WTC11 (cell line): ENCODE measurements at regions of chr7 and their contacts with region 1.

Region 1: DNA sequence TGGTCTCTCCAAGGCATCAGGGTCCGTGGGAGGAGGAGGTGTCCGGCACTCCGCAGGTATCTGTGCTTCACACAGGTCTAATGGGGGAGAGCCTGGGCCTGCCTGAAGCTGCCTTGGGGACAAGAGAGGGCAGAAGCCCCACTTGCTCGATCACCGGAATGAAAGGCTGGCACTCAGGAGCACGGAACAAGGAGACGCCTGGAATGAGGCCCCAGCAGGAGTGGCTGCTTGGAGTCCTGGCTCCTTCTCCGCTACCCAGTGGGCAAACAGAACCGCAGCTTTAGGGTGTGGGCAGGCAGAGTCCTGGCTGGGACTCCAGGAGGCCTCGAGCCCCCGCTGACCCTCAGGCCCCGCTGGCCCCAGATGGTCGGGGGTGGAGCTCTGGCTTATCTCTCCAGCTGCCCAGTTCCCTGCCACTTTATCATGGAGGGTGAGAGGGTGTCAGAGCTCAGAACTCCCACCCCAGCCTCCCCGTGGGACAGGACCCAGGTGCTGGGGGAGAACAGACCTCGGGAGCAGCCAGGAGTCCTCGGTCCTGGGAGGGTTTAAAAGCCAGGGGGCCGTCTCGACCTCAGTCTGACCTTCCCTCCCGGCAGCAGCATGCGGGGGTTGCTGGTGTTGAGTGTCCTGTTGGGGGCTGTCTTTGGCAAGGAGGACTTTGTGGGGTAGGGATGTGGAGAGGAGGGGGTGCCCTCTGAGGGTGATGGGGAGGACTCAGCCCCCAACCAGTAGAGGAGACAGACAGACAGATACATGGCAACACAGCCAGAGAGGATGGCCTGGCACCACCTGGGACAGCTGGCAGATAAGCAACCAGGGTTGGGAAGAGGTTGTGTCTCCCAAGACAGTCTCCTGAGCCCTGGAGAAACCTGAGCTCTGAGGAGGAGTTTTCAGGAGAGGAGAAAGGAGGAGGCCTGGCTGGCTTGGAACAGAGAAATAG is at the start of gene CPA1:
- DNase-seq: no peak
- ATAC-seq: no peak
- H3K4me3 Mint-ChIP-seq: no peak within 1 kb of the TSS
- H3K27ac Mint-ChIP-seq: no peak within 1 kb of the TSS
- H3K4me1 Mint-ChIP-seq: peaks cover 6% of the 10 kb centered on the region
- H3K27me3 Mint-ChIP-seq: peaks cover 8% of the 10 kb centered on the region
- CTCF ChIP-seq: no peak
- total RNA-seq, gene CPA1: 7.9 to 14.0 TPM (median 8.9 TPM) in 3 replicates

Region 2: DNA sequence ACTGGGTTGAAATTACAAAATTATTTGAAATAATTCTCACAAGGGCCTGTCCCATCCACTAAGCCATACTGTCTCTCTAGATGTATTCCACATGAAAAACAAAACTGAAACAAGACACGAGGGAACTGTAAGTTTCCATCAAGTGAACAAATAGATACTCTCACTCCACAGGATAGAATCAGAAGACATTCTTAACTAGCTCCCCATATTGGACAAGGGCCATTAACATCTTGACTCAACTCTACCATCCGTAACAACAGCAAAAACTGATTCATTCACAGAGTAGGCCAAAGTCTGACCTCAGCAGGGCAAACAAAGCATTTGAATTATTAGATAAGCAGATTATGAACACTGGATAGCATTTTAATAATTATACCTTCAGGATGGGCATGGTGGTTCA is 456.5 kb before region 1 on chr7:
- CTCF ChIA-PET with region 1: no interaction called
- POLR2A ChIA-PET with region 1: no interaction called
- DNase-seq: no peak
- ATAC-seq: no peak
- H3K4me3 Mint-ChIP-seq: no peak overlapping the region
- H3K27ac Mint-ChIP-seq: peak overlapping the region; percentile 30; the same call in 1 of the 2 replicates
- H3K4me1 Mint-ChIP-seq: peaks cover 15% of the 10 kb centered on the region
- H3K27me3 Mint-ChIP-seq: no peaks in the 10 kb centered on the region
- CTCF ChIP-seq: no peak

Region 3: GRCh38 chr7:130273081-130273932 is 106.9 kb before region 1 on chr7:
- CTCF ChIA-PET with region 1: interaction called, 11 read pairs
- POLR2A ChIA-PET with region 1: no interaction called
- DNase-seq: peak; percentile 84
- ATAC-seq: peak; percentile 83
- H3K4me3 Mint-ChIP-seq: peak overlapping the region; percentile 59
- H3K27ac Mint-ChIP-seq: peak overlapping the region; percentile 98
- H3K4me1 Mint-ChIP-seq: peaks cover 69% of the 10 kb centered on the region
- H3K27me3 Mint-ChIP-seq: peaks cover 10% of the 10 kb centered on the region
- CTCF ChIP-seq: no peak